ENCODE measurements at regions of chr6 and their contacts with region 1.

Region 1: GRCh38 chr6:125197795-125198269 is 44.3 kb downstream of the TPD52L1 start:
- DNase-seq: peak; percentile 78

Region 2: DNA sequence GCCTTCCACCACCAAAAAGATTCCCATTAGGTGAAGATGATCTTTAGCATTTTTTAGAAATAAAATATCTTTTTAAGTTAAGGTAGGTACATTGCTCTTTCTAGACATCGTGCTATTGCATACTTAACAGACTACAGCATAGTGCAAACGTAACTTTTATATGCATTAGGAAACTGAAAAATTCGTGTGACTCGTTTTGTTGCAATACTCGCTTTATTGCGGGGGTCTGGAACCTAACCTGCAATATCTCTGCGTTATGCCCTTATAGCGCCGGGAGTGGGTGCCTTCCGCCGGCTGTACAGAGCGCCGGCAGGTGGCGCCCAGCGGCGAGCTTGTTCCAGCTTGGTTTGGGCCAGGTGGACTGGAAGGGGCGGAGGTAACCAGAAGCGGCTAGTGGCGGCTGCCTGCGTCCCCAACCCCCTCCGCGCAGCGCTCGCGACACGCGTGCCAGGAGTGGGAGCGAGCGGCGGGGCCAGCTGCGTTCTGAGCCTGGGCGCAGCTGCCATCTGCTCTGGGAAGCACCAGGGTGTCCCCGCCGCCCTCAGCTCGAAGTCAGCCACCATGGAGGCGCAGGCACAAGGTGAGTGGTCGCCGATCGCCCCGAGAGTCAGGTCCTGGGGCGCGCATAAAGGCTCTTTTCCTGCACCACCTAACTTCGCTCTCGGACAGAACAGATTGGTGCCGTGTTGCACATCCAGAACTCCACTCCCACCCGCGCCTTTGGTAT is 44.3 kb before region 1 on chr6 and contains the start of gene TPD52L1:
- intact Hi-C with region 1: loop called (anchors 2 kb)
- DNase-seq: peak; percentile 93
- total RNA-seq, gene TPD52L1: 91.0 TPM

Region 3: DNA sequence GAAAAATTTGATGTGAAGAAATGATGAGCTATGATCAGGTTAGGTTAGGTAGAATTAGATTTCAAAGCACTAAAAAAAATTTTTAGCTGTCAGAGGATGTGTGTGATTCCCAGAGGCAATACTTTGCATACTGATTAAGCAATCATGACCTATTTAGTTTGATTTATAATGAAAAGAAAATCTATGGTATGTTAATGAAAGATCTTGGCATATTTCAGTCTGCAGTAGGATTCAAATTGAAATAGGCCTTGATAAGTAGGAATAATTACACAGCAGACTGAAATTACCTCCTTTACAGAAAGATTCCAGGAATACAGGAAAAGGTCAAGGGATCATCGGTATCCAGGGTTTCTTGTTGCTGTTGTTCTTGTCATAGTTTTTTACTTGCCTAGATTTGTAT is 34.6 kb after region 1 on chr6:
- intact Hi-C with region 1: loop called (anchors 5 kb)
- DNase-seq: no peak

Measured in cardiac septum (tissue), 1 donor.